ENCODE measurements at regions of chr5 and their contacts with region 1.

Region 1: GRCh38 chr5:129135633-129136032 is 41.1 kb downstream of the ISOC1 start:
- DNase-seq: no peak
- H3K4me3 ChIP-seq: no peak overlapping the region
- H3K27ac ChIP-seq: no peak overlapping the region
- H3K4me1 ChIP-seq: no peaks in the 10 kb centered on the region
- H3K27me3 ChIP-seq: no peaks in the 10 kb centered on the region
- CTCF ChIP-seq: no peak
- POLR2A ChIP-seq: no peak

Region 2: DNA sequence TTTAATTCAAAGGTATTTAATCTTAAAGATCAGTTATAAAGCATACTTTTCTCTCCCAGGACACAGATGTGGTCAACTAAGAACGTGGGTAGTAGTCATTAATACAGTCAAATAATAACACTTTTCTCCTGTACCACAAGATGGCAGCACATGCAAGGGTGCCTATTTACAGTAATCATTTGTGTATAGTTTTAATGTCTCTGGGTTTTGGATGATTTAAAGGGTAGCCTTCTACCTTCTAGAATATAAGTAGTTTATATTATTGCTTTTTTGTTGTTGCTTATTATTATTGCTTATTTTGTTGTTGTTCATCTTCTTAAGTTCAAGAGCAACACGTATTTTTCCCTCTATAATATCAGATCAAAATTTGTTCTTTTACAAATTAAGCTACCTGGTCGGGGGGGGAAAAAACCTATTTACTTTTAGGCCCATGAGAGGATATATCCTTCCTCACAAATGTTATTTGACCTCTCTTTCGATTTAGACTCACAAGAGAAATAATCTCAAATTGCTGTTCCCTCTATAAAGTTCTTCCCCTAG is 230.0 kb before region 1 on chr5:
- intact Hi-C with region 1: loop called (anchors 10 kb)
- DNase-seq: no peak
- H3K4me3 ChIP-seq: no peak overlapping the region
- H3K27ac ChIP-seq: no peak overlapping the region
- H3K4me1 ChIP-seq: no peaks in the 10 kb centered on the region
- H3K27me3 ChIP-seq: no peaks in the 10 kb centered on the region
- CTCF ChIP-seq: peak; percentile 50 to 82 (median 76)
- POLR2A ChIP-seq: no peak